Activated B cell treated with CpG ODN at 0.5 μM for 24 hours (primary cell): ENCODE measurements at regions of chr11 and their contacts with region 1.

Region 1: DNA sequence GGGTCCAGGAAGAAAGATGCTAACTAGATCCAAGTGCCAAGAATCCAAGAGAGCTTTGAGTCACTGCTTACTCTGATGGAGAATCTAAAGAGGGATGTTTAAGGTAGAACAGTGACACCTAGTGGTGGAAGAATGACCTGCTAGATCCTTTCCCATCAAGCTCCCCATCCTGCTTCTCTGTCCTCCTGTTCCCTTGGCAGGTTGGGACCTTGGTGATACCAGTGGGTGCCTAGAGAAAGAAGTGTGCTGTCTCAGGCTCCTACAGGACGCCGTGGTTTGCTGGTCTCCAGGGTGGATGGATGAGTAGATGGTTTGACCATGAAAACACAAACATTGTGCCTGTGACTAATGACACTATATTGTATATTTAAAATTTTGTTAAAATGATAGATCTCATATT is 383.7 kb downstream of the TMEM135 start:
- DNase-seq: no peak
- ATAC-seq: peak; percentile 47
- H3K4me3 Mint-ChIP-seq: no peak overlapping the region
- H3K27ac Mint-ChIP-seq: no peak overlapping the region
- H3K4me1 Mint-ChIP-seq: no peaks in the 10 kb centered on the region
- H3K27me3 Mint-ChIP-seq: no peaks in the 10 kb centered on the region
- CTCF ChIP-seq: no peak

Region 2: DNA sequence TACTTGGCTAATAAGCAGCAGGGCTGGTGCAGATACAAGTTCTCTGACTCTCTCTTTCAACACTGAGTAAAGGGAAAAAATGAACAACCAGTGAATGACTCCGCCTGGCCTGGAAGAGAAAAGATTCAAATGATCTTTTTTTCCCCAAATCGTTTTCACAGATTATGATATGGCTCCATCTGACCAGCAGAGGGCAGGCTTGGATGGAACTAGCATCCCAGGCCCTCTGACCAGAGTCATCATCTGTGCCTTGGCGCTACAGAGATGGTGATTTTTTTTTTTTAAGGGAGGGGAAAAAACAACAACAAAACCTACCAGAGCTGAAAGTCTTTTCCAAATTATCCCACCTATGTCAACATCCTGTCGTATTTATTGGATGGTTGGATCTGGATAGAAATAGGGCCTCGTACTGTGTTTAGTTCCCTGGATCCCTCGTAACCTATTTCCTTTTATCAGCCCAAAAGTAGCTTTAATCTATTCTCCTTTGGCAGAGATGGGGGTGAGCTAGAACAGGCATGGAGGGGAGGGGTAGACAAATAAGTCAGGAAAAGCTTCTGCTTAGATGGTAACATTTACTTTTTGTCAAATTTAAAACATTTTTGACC is 551.4 kb before region 1 on chr11:
- CTCF ChIA-PET with region 1: no interaction called
- POLR2A ChIA-PET with region 1: no interaction called
- intact Hi-C with region 1: loop called (anchors 1 kb)
- DNase-seq: no peak
- ATAC-seq: peak; percentile 50
- H3K4me3 Mint-ChIP-seq: no peak overlapping the region
- H3K27ac Mint-ChIP-seq: no peak overlapping the region
- H3K4me1 Mint-ChIP-seq: no peaks in the 10 kb centered on the region
- H3K27me3 Mint-ChIP-seq: peaks cover 3% of the 10 kb centered on the region
- CTCF ChIP-seq: peak; percentile 23

Region 3: DNA sequence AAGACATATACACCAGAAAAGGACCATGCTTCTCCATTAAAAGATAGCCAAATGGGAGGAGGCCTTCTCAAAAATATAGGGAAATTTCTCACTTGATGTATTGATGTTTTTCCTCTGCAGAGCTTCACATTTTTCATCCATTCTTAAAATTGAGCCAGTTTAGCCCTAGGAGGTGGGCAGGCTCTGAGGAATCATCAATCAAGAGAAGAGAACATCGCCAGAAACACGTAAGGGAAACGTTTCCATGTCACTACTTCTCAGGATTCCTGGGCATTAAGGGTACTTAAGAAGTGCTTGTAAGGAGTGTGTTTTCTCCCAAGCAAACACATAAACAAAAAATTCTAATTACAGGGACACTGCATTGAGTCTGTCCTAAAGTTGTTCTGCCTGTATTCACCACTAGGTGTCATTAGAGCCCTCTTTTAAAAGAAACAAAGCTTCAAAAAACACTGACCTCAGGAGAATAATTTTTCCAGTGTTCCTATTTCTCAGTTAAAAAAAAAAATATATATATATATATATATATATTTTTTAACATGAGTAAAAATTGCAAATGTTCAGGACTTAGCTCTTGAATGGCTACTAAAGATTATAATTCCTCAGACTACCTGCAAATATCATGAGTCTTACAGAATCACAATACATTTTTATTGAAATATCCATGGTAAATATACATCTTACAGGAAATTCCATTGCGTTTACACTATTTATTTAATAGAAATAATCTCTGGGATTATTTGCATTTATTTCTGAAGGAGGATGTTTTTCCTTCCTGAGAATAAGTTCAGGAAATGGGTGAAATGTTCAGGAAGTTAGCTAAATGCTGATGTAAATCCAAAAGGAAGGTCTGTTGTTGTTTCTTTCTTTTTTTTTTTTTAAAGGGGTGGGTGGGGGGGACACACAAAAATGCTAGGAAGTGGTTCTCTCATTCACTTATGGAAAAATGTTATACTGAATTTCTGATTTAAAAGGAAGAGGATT is 482.2 kb before region 1 on chr11:
- CTCF ChIA-PET with region 1: interaction called, 13 read pairs
- POLR2A ChIA-PET with region 1: no interaction called
- intact Hi-C with region 1: loop called (anchors 1 kb)
- DNase-seq: no peak
- ATAC-seq: no peak
- H3K4me3 Mint-ChIP-seq: no peak overlapping the region
- H3K27ac Mint-ChIP-seq: no peak overlapping the region
- H3K4me1 Mint-ChIP-seq: no peaks in the 10 kb centered on the region
- H3K27me3 Mint-ChIP-seq: no peaks in the 10 kb centered on the region
- CTCF ChIP-seq: no peak

Region 4: DNA sequence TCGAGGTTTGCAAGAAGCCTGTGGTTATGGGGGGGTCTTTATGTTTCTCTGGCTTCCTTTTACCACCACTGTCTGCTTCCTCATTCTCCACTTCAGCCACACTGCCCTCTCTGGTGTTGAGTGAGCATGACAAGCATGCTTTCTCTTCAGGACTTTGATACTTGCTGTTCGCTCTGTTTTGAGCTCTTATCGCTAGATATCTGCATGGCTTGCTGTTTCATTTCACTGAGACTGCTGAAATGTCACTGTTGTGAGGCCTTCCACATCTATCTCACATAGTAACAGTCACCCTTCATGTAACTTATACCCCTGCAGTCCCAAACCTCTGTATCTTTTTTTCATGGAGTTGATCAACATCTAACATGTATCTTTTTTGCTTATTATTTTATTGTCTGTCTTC is 323.8 kb before region 1 on chr11:
- CTCF ChIA-PET with region 1: no interaction called
- POLR2A ChIA-PET with region 1: no interaction called
- intact Hi-C with region 1: no loop called
- DNase-seq: no peak
- ATAC-seq: peak; percentile 86
- H3K4me3 Mint-ChIP-seq: no peak overlapping the region
- H3K27ac Mint-ChIP-seq: no peak overlapping the region
- H3K4me1 Mint-ChIP-seq: peaks cover 6% of the 10 kb centered on the region
- H3K27me3 Mint-ChIP-seq: no peaks in the 10 kb centered on the region
- CTCF ChIP-seq: no peak

Region 5: DNA sequence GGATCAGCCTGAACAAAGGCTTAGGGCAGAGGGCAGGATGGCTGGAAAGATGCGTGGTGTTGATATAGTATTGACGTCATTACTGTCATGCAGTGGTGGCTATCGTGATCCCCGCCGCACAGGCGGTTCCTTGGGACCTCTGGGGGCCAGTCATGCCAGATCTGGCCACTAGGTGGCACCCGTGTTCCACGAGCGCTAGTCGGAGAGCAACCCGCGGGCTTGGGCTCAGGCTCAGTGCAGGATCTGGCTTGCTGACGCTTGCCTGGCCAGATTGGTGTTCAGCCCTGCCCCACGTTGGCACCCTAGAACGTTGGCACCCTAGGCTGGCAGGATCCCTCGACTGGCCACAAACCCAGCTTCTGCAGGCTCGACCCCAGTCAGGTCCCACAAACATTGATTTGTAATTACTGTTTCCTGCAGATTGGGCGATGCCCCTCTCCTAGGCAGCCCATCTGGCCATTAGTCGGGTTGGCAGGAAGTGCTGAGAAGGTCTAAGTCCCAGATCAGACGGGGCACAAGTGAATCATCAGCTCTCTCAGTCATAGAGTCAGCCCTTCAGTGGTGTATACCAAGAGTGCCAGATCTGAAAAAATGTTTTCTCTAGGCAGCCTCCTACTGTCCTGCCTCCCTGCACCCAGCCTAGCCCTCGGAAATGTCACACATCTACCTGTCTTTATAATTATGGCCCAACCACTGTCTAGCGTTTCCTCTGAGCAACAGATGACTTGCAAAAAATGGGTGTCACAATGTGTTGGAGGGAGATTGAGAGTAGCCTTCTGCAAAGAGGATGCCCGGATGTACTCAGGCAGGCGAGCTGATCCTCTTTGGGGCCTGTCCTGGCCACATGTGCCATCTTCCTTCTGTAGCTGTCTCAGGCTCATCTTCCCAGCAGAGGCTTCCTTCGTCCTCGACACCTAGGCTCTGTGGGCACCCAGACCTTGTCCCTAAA is 68.4 kb before region 1 on chr11:
- CTCF ChIA-PET with region 1: interaction called, 16 read pairs
- POLR2A ChIA-PET with region 1: no interaction called
- intact Hi-C with region 1: no loop called
- DNase-seq: peak; percentile 75
- ATAC-seq: peak; percentile 95
- H3K4me3 Mint-ChIP-seq: no peak overlapping the region
- H3K27ac Mint-ChIP-seq: no peak overlapping the region
- H3K4me1 Mint-ChIP-seq: peaks cover 14% of the 10 kb centered on the region
- H3K27me3 Mint-ChIP-seq: no peaks in the 10 kb centered on the region
- CTCF ChIP-seq: peak; percentile 88

Region 6: DNA sequence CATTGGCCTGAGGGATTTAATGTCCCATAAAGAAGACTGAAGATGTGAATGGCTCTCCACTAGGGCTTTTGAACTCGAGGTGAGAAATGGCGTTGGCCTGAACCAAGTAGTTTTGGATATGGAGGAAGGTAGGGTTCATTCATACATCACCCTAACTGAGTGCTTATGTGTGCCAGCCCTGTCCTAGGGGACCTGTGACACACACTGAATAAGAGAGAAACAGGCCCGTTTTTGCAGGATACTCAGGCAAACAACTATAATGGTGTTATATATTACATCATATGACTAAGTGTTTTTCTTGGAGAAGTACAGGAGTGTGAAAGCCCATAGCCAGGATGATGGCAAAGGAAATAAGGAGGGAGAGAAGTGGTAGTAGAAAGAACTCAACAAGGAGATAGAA is 15.6 kb before region 1 on chr11:
- CTCF ChIA-PET with region 1: interaction called, 18 read pairs
- POLR2A ChIA-PET with region 1: no interaction called
- intact Hi-C with region 1: no loop called
- DNase-seq: no peak
- ATAC-seq: no peak
- H3K4me3 Mint-ChIP-seq: no peak overlapping the region
- H3K27ac Mint-ChIP-seq: no peak overlapping the region
- H3K4me1 Mint-ChIP-seq: no peaks in the 10 kb centered on the region
- H3K27me3 Mint-ChIP-seq: no peaks in the 10 kb centered on the region
- CTCF ChIP-seq: no peak